ENCODE measurements at regions of chr11 and their contacts with region 1.

Region 1: DNA sequence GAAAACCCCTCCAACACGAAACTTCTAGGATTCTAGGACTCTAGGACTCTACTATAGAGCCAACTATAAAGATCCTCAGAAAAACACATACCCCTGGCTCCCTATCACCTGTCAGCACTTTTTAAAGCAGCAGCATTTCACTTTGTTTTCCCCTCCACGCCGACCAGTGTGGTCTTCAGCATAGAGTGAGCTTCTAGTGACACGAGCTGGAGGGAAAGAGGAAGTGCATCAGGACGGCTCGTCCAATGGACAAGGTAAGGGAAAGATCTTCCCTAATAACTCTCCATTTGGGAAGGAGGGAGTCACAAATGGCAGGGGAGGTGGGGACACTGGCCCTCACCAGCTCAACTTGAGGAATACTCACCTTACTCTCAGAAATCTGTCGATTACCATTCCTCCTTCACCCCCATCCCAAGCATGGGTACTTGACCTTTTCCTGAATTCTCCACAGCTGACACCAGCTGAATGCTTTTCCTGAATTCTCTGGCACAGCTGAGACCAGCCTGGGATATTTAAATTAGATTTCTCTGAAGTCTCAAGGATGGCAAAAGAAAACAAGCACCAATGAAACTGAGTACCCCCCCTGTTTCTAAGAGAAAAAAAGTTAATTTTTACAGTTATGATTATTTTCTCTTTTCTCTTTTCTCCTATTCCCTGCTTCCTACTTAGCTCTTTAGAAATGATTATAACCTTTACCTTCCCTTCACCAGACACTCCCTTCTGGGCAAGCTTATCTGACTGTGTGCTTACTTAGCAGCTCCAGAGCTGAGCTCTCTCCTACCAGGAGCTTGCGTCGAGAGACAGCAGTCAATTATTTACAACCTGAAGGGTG is 33.3 kb upstream of the NNMT start:
- DNase-seq: no peak
- H3K4me3 ChIP-seq: no peak overlapping the region
- H3K27ac ChIP-seq: no peak overlapping the region
- H3K4me1 ChIP-seq: no peaks in the 10 kb centered on the region; a peak in 3 of 7 replicates
- H3K27me3 ChIP-seq: no peaks in the 10 kb centered on the region
- CTCF ChIP-seq: peak; percentile 62 to 80 (median 64)
- EP300 ChIP-seq: no peak
- POLR2A ChIP-seq: no peak
- RAD21 ChIP-seq: peak; percentile 88 to 91

Region 2: DNA sequence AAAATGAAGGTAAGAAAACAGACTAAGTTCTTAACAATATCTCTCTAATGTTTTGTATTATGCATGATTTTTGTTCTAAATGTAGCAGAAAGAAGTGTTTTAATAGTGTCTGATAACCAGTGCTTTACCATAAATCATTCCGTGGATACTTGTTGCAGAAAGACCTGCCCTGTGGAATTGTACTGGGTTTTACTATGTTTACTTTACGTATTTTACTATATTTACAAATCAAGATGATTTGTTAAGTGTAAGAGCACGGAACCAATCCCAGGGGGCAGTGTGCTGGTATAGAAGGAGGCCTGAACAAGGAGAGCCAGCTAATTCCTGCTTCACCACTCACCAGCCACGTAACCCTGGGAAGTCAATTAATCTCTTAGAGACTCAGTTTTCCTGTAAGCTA is 356.9 kb before region 1 on chr11:
- CTCF ChIA-PET with region 1: interaction called, 33 read pairs
- POLR2A ChIA-PET with region 1: no interaction called
- DNase-seq: no peak
- H3K4me3 ChIP-seq: no peak overlapping the region
- H3K27ac ChIP-seq: no peak overlapping the region
- H3K4me1 ChIP-seq: peaks cover 0 to 9% (median 3%) of the 10 kb centered on the region in 4 experiments; a peak in 1 of 7 replicates
- H3K27me3 ChIP-seq: no peaks in the 10 kb centered on the region
- CTCF ChIP-seq: peak; percentile 40 to 60 (median 51)
- EP300 ChIP-seq: no peak
- POLR2A ChIP-seq: no peak
- RAD21 ChIP-seq: peak; percentile 44 to 62

Region 3: DNA sequence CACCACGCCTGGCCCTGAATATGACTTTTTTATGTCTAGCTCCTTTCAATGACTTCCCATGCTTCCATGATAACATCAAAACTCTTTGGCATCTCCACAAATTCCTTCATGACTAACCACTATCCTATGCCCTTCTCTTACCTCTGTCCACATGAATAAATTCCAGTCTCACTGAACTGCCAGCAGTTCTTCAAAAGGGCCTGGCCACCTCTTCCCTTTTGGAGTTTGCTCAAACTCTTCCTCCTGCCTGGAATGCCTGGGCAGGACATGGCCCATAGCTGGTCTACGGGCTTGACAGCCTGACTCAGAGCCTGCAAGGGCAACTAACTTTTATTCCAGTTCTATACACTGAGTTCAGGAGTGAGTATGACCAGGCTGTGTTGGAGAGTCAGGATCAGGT is 245.2 kb before region 1 on chr11:
- CTCF ChIA-PET with region 1: interaction called, 164 read pairs
- POLR2A ChIA-PET with region 1: no interaction called
- DNase-seq: no peak
- H3K4me3 ChIP-seq: no peak overlapping the region
- H3K27ac ChIP-seq: no peak overlapping the region
- H3K4me1 ChIP-seq: no peaks in the 10 kb centered on the region
- H3K27me3 ChIP-seq: no peaks in the 10 kb centered on the region
- CTCF ChIP-seq: no peak
- EP300 ChIP-seq: no peak
- POLR2A ChIP-seq: no peak
- RAD21 ChIP-seq: no peak

Region 4: GRCh38 chr11:114053406-114053805 is 209.5 kb before region 1 on chr11:
- CTCF ChIA-PET with region 1: interaction called, 53 read pairs
- POLR2A ChIA-PET with region 1: no interaction called
- DNase-seq: no peak
- H3K4me3 ChIP-seq: no peak overlapping the region
- H3K27ac ChIP-seq: no peak overlapping the region
- H3K4me1 ChIP-seq: peaks cover 5 to 7% (median 6%) of the 10 kb centered on the region in 4 experiments
- H3K27me3 ChIP-seq: peaks cover 19 to 30% (median 24%) of the 10 kb centered on the region in 4 experiments
- CTCF ChIP-seq: no peak
- EP300 ChIP-seq: no peak
- POLR2A ChIP-seq: no peak
- RAD21 ChIP-seq: no peak

Region 5: GRCh38 chr11:114180301-114181055 is 82.4 kb before region 1 on chr11:
- CTCF ChIA-PET with region 1: interaction called, 109 read pairs
- POLR2A ChIA-PET with region 1: no interaction called
- DNase-seq: no peak
- H3K4me3 ChIP-seq: no peak overlapping the region
- H3K27ac ChIP-seq: no peak overlapping the region
- H3K4me1 ChIP-seq: peaks cover 0 to 6% (median 0%) of the 10 kb centered on the region in 4 experiments; a peak in 2 of 7 replicates
- H3K27me3 ChIP-seq: no peaks in the 10 kb centered on the region
- CTCF ChIP-seq: peak; percentile 75 to 87 (median 79)
- EP300 ChIP-seq: no peak
- POLR2A ChIP-seq: no peak
- RAD21 ChIP-seq: peak; percentile 82 to 87

Region 6: DNA sequence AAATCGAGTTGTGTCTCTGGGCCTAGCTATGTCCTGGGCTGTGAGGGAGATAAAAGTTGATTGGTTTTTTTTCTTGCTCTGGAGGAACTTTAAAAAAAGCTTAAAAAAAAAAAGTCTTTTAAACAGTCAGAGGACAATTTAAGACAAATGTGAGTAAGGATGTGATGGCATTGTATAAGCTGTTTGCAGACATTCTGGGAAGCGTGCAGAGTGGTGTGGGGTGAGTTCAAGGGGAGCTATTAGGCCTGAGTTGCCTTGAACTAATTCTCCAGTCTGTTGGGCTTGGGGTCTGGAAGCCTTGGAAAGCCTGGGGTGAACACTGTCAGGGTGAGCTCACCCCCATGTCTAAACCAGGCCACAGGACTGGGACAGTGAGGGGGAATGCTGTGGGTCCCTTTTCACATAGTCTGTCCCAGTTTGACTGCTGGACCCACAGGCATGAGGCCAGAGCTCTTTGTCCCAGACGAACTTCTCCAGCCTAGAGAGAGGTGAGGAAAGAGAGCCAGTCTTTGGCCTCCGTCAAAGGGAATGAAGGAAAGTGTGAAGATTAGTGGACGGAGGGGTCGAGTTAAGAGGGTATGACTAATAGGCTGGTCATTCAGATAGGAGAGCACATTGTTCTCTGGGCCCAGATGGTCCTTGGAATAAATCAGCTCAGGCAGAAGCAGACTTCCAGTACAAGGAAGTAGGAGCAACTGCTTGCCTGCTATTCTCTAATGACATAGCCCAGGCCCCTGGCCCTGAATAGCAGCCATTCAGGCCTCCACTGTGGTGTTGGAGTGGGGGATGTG is 43.1 kb before region 1 on chr11:
- CTCF ChIA-PET with region 1: interaction called, 14 read pairs
- POLR2A ChIA-PET with region 1: no interaction called
- DNase-seq: no peak
- H3K4me3 ChIP-seq: no peak overlapping the region
- H3K27ac ChIP-seq: no peak overlapping the region
- H3K4me1 ChIP-seq: no peaks in the 10 kb centered on the region
- H3K27me3 ChIP-seq: no peaks in the 10 kb centered on the region
- CTCF ChIP-seq: no peak
- EP300 ChIP-seq: no peak
- POLR2A ChIP-seq: no peak
- RAD21 ChIP-seq: no peak

Measured in H1 (cell line).